ENCODE measurements at regions of chr16 and their contacts with region 1.

Region 1: DNA sequence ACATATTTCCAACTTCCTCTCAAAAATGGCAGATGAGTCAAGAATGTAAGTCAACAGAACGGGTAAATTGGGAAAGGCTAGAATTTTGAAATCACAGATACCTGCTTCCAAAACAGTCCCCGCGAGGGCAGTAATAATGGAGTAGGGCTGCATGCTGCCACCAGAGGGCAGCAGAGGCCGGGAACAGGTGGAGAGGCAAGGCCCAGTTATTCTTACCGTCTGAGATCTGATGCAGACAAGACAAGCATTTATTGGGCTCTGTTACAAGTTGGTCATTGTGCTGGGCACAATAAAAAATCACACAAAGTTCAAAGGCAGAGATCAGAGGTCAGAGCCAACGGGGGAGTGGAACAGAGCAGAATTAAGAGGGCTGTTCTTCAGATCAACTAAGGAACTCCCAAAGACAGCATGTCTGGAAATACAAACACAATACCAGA is 8.8 kb upstream of the MLKL start:
- DNase-seq: peak; percentile 80
- H3K4me3 ChIP-seq: no peak overlapping the region
- H3K27ac ChIP-seq: no peak overlapping the region
- H3K4me1 ChIP-seq: no peaks in the 10 kb centered on the region
- CTCF ChIP-seq: peak; percentile 100

Region 2: GRCh38 chr16:74774203-74775116 is 65.0 kb after region 1 on chr16 and contains the start of gene FA2H:
- CTCF ChIA-PET with region 1: no interaction called
- POLR2A ChIA-PET with region 1: no interaction called
- intact Hi-C with region 1: loop called (anchors 5 kb)
- DNase-seq: peak; percentile 87
- H3K4me3 ChIP-seq: peak within 1 kb of the TSS; percentile 66
- H3K27ac ChIP-seq: no peak within 1 kb of the TSS
- H3K4me1 ChIP-seq: peaks cover 25% of the 10 kb centered on the region
- CTCF ChIP-seq: peak; percentile 44
- total RNA-seq, gene FA2H: 0.73 TPM in 1 of 2 replicates, not detected in the other

Region 3: DNA sequence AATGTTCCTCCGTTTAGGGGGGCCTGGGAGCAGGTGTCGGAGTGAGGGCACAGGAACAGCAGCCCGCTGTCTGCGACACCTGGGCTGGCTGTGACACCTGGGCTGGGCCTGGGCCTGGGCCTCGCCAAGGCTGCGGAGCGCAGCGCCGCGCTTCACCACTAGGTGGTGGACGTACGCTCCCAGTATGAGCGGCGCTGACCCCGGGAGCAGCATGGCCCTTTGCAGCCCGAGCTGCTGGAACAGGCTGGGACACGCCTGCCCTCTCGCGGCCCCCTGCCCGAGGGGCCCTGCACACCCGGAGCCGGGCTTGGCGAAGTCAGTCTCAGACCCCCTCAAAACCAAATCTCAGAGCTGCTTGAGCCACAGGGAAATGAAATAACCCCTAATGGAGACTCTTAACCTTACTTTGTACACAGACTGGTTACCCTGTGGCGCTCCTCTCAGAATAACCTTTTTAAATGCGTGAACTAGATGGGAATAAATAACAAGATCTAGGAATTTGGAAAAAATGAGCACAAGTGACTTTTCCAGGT is 103.7 kb after region 1 on chr16:
- CTCF ChIA-PET with region 1: no interaction called
- POLR2A ChIA-PET with region 1: no interaction called
- intact Hi-C with region 1: loop called (anchors 1 kb)
- DNase-seq: peak; percentile 80
- H3K4me3 ChIP-seq: no peak overlapping the region
- H3K27ac ChIP-seq: no peak overlapping the region
- H3K4me1 ChIP-seq: peaks cover 5% of the 10 kb centered on the region
- CTCF ChIP-seq: peak; percentile 94

Region 4: DNA sequence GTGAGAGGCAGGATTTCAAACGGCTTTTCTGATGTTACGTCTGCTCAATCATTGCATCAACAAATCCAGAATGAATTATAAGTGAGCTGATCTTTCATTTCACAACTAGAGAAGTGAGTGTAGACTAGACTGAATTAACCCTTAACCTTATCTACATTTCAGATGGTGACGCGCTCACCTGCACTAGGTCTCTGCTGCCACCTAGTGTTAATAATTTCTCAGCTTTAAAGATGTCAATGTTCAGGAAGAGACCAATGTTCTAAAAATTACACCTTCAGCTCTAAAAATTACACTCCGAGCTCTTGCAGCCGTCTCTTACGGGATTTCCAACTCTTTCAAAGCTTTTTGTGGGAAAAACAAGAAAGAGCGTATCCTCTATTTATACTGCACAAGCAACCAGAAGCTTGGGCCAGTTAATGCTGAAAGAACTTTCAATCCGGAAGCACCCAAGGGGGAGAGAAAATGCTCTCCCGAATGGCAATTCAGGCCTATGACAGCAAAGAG is 153.3 kb after region 1 on chr16:
- CTCF ChIA-PET with region 1: interaction called, 10 read pairs
- POLR2A ChIA-PET with region 1: interaction called, 5 read pairs
- intact Hi-C with region 1: loop called (anchors 1 kb)
- DNase-seq: peak; percentile 69
- H3K4me3 ChIP-seq: no peak overlapping the region
- H3K27ac ChIP-seq: no peak overlapping the region
- H3K4me1 ChIP-seq: peaks cover 11% of the 10 kb centered on the region
- CTCF ChIP-seq: peak; percentile 99

Measured in OCI-LY7 (cell line).